CD8-positive, alpha-beta memory T cell (primary cell): ENCODE measurements at regions of chr1 and their contacts with region 1.

Region 1: GRCh38 chr1:25566730-25567341 is 23.4 kb downstream of the LDLRAP1 start:
- DNase-seq: peak in 1 of 5 donors; percentile 74
- H3K4me3 ChIP-seq: no peak overlapping the region
- H3K4me3 Mint-ChIP-seq: peak overlapping the region in 5 of 7 donors; percentile 68 to 86 (median 79)
- H3K27ac ChIP-seq: no peak overlapping the region
- H3K27ac Mint-ChIP-seq: peak overlapping the region in 3 of 8 donors; percentile 47 to 96 (median 95)
- H3K4me1 ChIP-seq: peaks cover 81% of the 10 kb centered on the region
- H3K4me1 Mint-ChIP-seq: peaks cover 55 to 92% (median 56%) of the 10 kb centered on the region in 3 donors
- H3K27me3 ChIP-seq: no peaks in the 10 kb centered on the region
- H3K27me3 Mint-ChIP-seq: no peaks in the 10 kb centered on the region

Region 2: GRCh38 chr1:25520446-25521061 is 46.3 kb before region 1 on chr1:
- CTCF ChIA-PET with region 1: interaction called, 17 read pairs
- POLR2A ChIA-PET with region 1: no interaction called
- DNase-seq: peak; percentile 43 to 77 (median 60)
- H3K4me3 ChIP-seq: no peak overlapping the region
- H3K4me3 Mint-ChIP-seq: no peak overlapping the region
- H3K27ac ChIP-seq: no peak overlapping the region
- H3K27ac Mint-ChIP-seq: peak overlapping the region in 7 of 8 donors; percentile 19 to 90 (median 65)
- H3K4me1 ChIP-seq: peaks cover 6% of the 10 kb centered on the region
- H3K4me1 Mint-ChIP-seq: peaks cover 9 to 11% (median 10%) of the 10 kb centered on the region in 3 donors
- H3K27me3 ChIP-seq: no peaks in the 10 kb centered on the region
- H3K27me3 Mint-ChIP-seq: peaks cover 0 to 3% of the 10 kb centered on the region in 2 donors

Region 3: GRCh38 chr1:25543425-25544242 is 23.2 kb before region 1 on chr1 and contains the start of gene LDLRAP1:
- CTCF ChIA-PET with region 1: interaction called, 23 read pairs
- POLR2A ChIA-PET with region 1: interaction called, 13 read pairs
- DNase-seq: peak; percentile 35 to 63 (median 56)
- H3K4me3 ChIP-seq: peak within 1 kb of the TSS; percentile 67
- H3K4me3 Mint-ChIP-seq: peak within 1 kb of the TSS; percentile 88 to 94 (median 92)
- H3K27ac ChIP-seq: peak within 1 kb of the TSS; percentile 65
- H3K27ac Mint-ChIP-seq: peak within 1 kb of the TSS; percentile 78 to 92 (median 87)
- H3K4me1 ChIP-seq: peaks cover 39% of the 10 kb centered on the region
- H3K4me1 Mint-ChIP-seq: peaks cover 35 to 49% (median 43%) of the 10 kb centered on the region in 3 donors
- H3K27me3 ChIP-seq: no peaks in the 10 kb centered on the region
- H3K27me3 Mint-ChIP-seq: no peaks in the 10 kb centered on the region
- total RNA-seq, gene LDLRAP1: 21.1 to 22.0 TPM

Region 4: GRCh38 chr1:25549273-25550154 is 17.3 kb before region 1 on chr1:
- CTCF ChIA-PET with region 1: interaction called, 23 read pairs
- POLR2A ChIA-PET with region 1: interaction called, 13 read pairs
- DNase-seq: peak; percentile 57 to 87 (median 72)
- H3K4me3 ChIP-seq: peak overlapping the region; percentile 68
- H3K4me3 Mint-ChIP-seq: peak overlapping the region; percentile 3 to 92 (median 78)
- H3K27ac ChIP-seq: peak overlapping the region; percentile 53
- H3K27ac Mint-ChIP-seq: peak overlapping the region; percentile 53 to 99 (median 96)
- H3K4me1 ChIP-seq: peaks cover 95% of the 10 kb centered on the region
- H3K4me1 Mint-ChIP-seq: peaks cover 91 to 98% (median 95%) of the 10 kb centered on the region in 3 donors
- H3K27me3 ChIP-seq: no peaks in the 10 kb centered on the region
- H3K27me3 Mint-ChIP-seq: no peaks in the 10 kb centered on the region

Region 5: GRCh38 chr1:25711555-25712298 is 144.9 kb after region 1 on chr1:
- CTCF ChIA-PET with region 1: no interaction called
- POLR2A ChIA-PET with region 1: no interaction called
- DNase-seq: peak in 3 of 5 donors; percentile 26 to 63 (median 42)
- H3K4me3 ChIP-seq: no peak overlapping the region
- H3K4me3 Mint-ChIP-seq: peak overlapping the region in 6 of 7 donors; percentile 5 to 61 (median 28)
- H3K27ac ChIP-seq: no peak overlapping the region
- H3K27ac Mint-ChIP-seq: peak overlapping the region in 7 of 8 donors; percentile 11 to 78 (median 47)
- H3K4me1 ChIP-seq: peaks cover 45% of the 10 kb centered on the region
- H3K4me1 Mint-ChIP-seq: peaks cover 32 to 40% (median 39%) of the 10 kb centered on the region in 3 donors
- H3K27me3 ChIP-seq: no peaks in the 10 kb centered on the region
- H3K27me3 Mint-ChIP-seq: no peaks in the 10 kb centered on the region